ENCODE measurements at regions of chr14 and their contacts with region 1.

Region 1: GRCh38 chr14:95609387-95609990 is 74.6 kb downstream of the GLRX5 start:
- DNase-seq: peak in 5 of 6 donors; percentile 30 to 67 (median 46)
- ATAC-seq: peak in 3 of 4 donors; percentile 77 to 87 (median 86)
- H3K4me3 ChIP-seq: no peak overlapping the region
- H3K27ac ChIP-seq: no peak overlapping the region
- H3K4me1 ChIP-seq: no peaks in the 10 kb centered on the region
- H3K27me3 ChIP-seq: no peaks in the 10 kb centered on the region
- CTCF ChIP-seq: peak; percentile 18 to 59 (median 48)

Region 2: GRCh38 chr14:95683793-95684192 is 74.3 kb after region 1 on chr14:
- intact Hi-C with region 1: loop called in 2 of 3 experiments (anchors 5 to 10 kb)
- DNase-seq: peak in 2 of 6 donors; percentile 38 to 49
- ATAC-seq: peak; percentile 67 to 86 (median 76)
- H3K4me3 ChIP-seq: no peak overlapping the region
- H3K27ac ChIP-seq: no peak overlapping the region
- H3K4me1 ChIP-seq: peaks cover 0 to 4% (median 0%) of the 10 kb centered on the region in 3 donors
- H3K27me3 ChIP-seq: no peaks in the 10 kb centered on the region
- CTCF ChIP-seq: peak; percentile 47 to 72 (median 56)

Region 3: GRCh38 chr14:95774265-95775160 is 165.0 kb after region 1 on chr14:
- intact Hi-C with region 1: loop called in 1 of 3 experiments (anchors 10 kb)
- DNase-seq: peak in 5 of 6 donors; percentile 26 to 72 (median 46)
- ATAC-seq: peak; percentile 64 to 90 (median 82)
- H3K4me3 ChIP-seq: no peak overlapping the region
- H3K27ac ChIP-seq: no peak overlapping the region
- H3K4me1 ChIP-seq: no peaks in the 10 kb centered on the region
- H3K27me3 ChIP-seq: no peaks in the 10 kb centered on the region
- CTCF ChIP-seq: peak; percentile 76 to 92 (median 82)

Measured in pancreas (tissue), 10 donors.